ENCODE measurements at regions of chr17 and their contacts with region 1.

Region 1: GRCh38 chr17:48593840-48594537 is 410 bp upstream of the HOXB5 start:
- DNase-seq: peak; percentile 61 to 88
- H3K4me3 ChIP-seq: peak overlapping the region in 1 of 2 donors; percentile 20
- H3K27ac ChIP-seq: peak overlapping the region in 1 of 2 donors; percentile 26
- H3K4me1 ChIP-seq: peaks cover 0 to 7% of the 10 kb centered on the region in 2 donors
- H3K27me3 ChIP-seq: peaks cover 9 to 60% of the 10 kb centered on the region in 2 donors
- CTCF ChIP-seq: peak; percentile 83 to 94 (median 92)
- POLR2A ChIP-seq: no peak

Region 2: GRCh38 chr17:48344246-48344645 is 249.7 kb before region 1 on chr17:
- intact Hi-C with region 1: loop called (anchors 10 kb)
- DNase-seq: no peak
- H3K4me3 ChIP-seq: no peak overlapping the region
- H3K27ac ChIP-seq: no peak overlapping the region
- H3K4me1 ChIP-seq: no peaks in the 10 kb centered on the region
- H3K27me3 ChIP-seq: peaks cover 0 to 11% of the 10 kb centered on the region in 2 donors
- CTCF ChIP-seq: no peak
- POLR2A ChIP-seq: no peak

Region 3: GRCh38 chr17:48543107-48543853 is 50.7 kb before region 1 on chr17:
- intact Hi-C with region 1: no loop called
- DNase-seq: peak in 1 of 2 donors; percentile 52
- H3K4me3 ChIP-seq: peak overlapping the region; percentile 55 to 64
- H3K27ac ChIP-seq: peak overlapping the region; percentile 93 to 97
- H3K4me1 ChIP-seq: peaks cover 10 to 12% of the 10 kb centered on the region in 2 donors
- H3K27me3 ChIP-seq: no peaks in the 10 kb centered on the region
- CTCF ChIP-seq: peak in 2 of 4 experiments; percentile 16 to 24
- POLR2A ChIP-seq: peak; percentile 2 to 24

Measured in uterus (tissue), 4 donors.